Natural killer cell (primary cell): ENCODE measurements at regions of chr1 and their contacts with region 1.

Region 1: GRCh38 chr1:21176586-21177555 is at the start of gene EIF4G3:
- DNase-seq: peak; percentile 98 to 100
- ATAC-seq: peak; percentile 90 to 97 (median 92)
- H3K4me3 ChIP-seq: peak within 1 kb of the TSS; percentile 89
- H3K4me3 Mint-ChIP-seq: peak within 1 kb of the TSS; percentile 97
- H3K27ac ChIP-seq: peak within 1 kb of the TSS; percentile 89
- H3K27ac Mint-ChIP-seq: peak within 1 kb of the TSS; percentile 89 to 94
- H3K4me1 ChIP-seq: peaks cover 15% of the 10 kb centered on the region
- H3K4me1 Mint-ChIP-seq: peaks cover 25 to 38% of the 10 kb centered on the region in 2 donors
- H3K27me3 ChIP-seq: no peaks in the 10 kb centered on the region
- H3K27me3 Mint-ChIP-seq: no peaks in the 10 kb centered on the region
- CTCF ChIP-seq: no peak
- total RNA-seq, gene EIF4G3: 105 to 107 (median 107) TPM

Region 2: GRCh38 chr1:20786253-20787028 is 390.4 kb before region 1 on chr1:
- intact Hi-C with region 1: loop called (anchors 5 kb)
- DNase-seq: peak; percentile 93 to 98
- ATAC-seq: peak; percentile 73 to 86 (median 78)
- H3K4me3 ChIP-seq: peak overlapping the region; percentile 77
- H3K4me3 Mint-ChIP-seq: peak overlapping the region; percentile 99
- H3K27ac ChIP-seq: peak overlapping the region; percentile 92
- H3K27ac Mint-ChIP-seq: peak overlapping the region; percentile 97 to 98
- H3K4me1 ChIP-seq: peaks cover 17% of the 10 kb centered on the region
- H3K4me1 Mint-ChIP-seq: peaks cover 34 to 35% of the 10 kb centered on the region in 2 donors
- H3K27me3 ChIP-seq: no peaks in the 10 kb centered on the region
- H3K27me3 Mint-ChIP-seq: no peaks in the 10 kb centered on the region
- CTCF ChIP-seq: no peak

Region 3: GRCh38 chr1:21022279-21023040 is 154.4 kb before region 1 on chr1:
- intact Hi-C with region 1: loop called (anchors 5 kb)
- DNase-seq: peak in 1 of 2 donors; percentile 64
- ATAC-seq: peak; percentile 92 to 96 (median 95)
- H3K4me3 ChIP-seq: peak overlapping the region; percentile 18
- H3K4me3 Mint-ChIP-seq: peak overlapping the region; percentile 79
- H3K27ac ChIP-seq: peak overlapping the region; percentile 72
- H3K27ac Mint-ChIP-seq: peak overlapping the region; percentile 87 to 98
- H3K4me1 ChIP-seq: peaks cover 9% of the 10 kb centered on the region
- H3K4me1 Mint-ChIP-seq: peaks cover 34 to 42% of the 10 kb centered on the region in 2 donors
- H3K27me3 ChIP-seq: no peaks in the 10 kb centered on the region
- H3K27me3 Mint-ChIP-seq: no peaks in the 10 kb centered on the region
- CTCF ChIP-seq: no peak